ENCODE measurements at regions of chr1 and their contacts with region 1.

Region 1: DNA sequence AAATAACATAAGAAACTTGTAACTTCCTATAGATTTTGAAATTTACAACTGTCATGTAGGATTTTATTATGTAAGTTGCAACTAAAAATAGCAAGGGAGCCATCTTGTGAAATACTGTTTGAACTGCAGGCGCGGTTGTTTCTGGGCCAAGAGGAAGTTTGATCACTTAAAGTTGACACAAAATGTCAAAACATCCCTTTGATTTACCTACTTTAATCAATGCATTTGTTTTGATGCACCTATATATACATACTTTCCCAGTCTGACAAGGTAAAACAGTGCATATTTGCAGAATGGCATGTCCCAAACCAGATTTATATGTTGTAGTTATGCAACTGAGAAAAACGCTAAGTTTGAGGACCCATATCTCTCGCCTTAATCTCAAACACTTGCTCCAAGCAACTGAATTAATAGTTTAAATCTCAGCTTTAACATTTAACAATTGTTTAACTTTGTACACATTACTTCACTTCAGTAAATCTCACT is 63.8 kb downstream of the KCNK2 start:
- DNase-seq: peak; percentile 28 to 29
- H3K4me3 ChIP-seq: no peak overlapping the region
- H3K27ac ChIP-seq: no peak overlapping the region
- H3K4me1 ChIP-seq: no peaks in the 10 kb centered on the region
- H3K27me3 ChIP-seq: no peaks in the 10 kb centered on the region
- CTCF ChIP-seq: peak in 5 of 6 experiments; percentile 22 to 70 (median 60)
- POLR2A ChIP-seq: no peak

Region 2: GRCh38 chr1:214658786-214659185 is 487.6 kb before region 1 on chr1:
- intact Hi-C with region 1: loop called (anchors 10 kb)
- DNase-seq: peak; percentile 26 to 30
- H3K4me3 ChIP-seq: no peak overlapping the region
- H3K27ac ChIP-seq: no peak overlapping the region
- H3K4me1 ChIP-seq: no peaks in the 10 kb centered on the region
- H3K27me3 ChIP-seq: no peaks in the 10 kb centered on the region
- CTCF ChIP-seq: peak in 4 of 6 experiments; percentile 30 to 62 (median 50)
- POLR2A ChIP-seq: no peak

Region 3: DNA sequence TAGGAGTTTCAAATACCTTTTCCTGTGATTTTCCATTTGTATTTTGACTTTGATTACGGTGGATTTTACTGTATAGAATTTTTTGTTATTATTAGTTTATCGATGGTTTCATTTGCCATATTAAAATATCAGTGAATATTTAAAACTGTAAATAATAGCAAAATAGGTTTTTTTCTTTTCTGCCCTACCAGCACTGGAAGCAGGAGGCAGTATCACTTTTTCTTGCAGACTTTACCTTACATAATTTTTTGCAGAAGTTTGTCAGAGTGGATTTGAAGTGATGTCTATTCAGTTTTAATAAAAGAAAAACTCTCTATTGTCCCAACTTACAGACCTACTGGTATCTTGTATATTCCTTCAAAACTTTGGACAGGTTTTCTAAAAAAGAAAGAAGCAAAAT is 329.8 kb before region 1 on chr1:
- intact Hi-C with region 1: loop called (anchors 10 kb)
- DNase-seq: no peak
- H3K4me3 ChIP-seq: no peak overlapping the region
- H3K27ac ChIP-seq: no peak overlapping the region
- H3K4me1 ChIP-seq: no peaks in the 10 kb centered on the region
- H3K27me3 ChIP-seq: no peaks in the 10 kb centered on the region
- CTCF ChIP-seq: no peak
- POLR2A ChIP-seq: no peak

Region 4: DNA sequence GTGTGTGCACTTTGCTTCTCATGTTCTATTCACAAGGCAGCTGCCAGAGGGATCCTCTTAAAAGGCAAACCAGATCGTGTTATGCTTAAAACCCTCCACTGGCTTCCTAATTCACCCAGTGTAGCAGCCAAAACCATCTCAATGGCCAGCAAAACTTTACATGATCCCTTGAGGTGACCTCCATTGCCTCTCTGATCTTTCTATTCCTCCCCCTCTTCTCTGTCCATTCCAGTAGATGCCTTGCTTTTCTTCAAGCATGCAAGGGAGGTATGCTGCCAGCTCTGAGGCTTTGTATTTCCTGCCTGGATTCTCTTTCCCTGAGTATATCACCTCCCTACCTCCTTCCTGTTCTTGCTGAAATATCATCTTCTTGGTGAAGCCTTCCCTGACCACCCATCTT is 157.0 kb before region 1 on chr1:
- intact Hi-C with region 1: no loop called
- DNase-seq: peak; percentile 8 to 20
- H3K4me3 ChIP-seq: no peak overlapping the region
- H3K27ac ChIP-seq: no peak overlapping the region
- H3K4me1 ChIP-seq: peaks cover 0 to 8% of the 10 kb centered on the region in 2 donors
- H3K27me3 ChIP-seq: no peaks in the 10 kb centered on the region
- CTCF ChIP-seq: no peak
- POLR2A ChIP-seq: no peak

Region 5: GRCh38 chr1:215330426-215330825 is 184.0 kb after region 1 on chr1:
- intact Hi-C with region 1: no loop called
- DNase-seq: no peak
- H3K4me3 ChIP-seq: no peak overlapping the region
- H3K27ac ChIP-seq: no peak overlapping the region
- H3K4me1 ChIP-seq: no peaks in the 10 kb centered on the region
- H3K27me3 ChIP-seq: no peaks in the 10 kb centered on the region
- CTCF ChIP-seq: no peak
- POLR2A ChIP-seq: no peak